ENCODE measurements at regions of chr5 and their contacts with region 1.

Region 1: GRCh38 chr5:178895651-178896571 is at the start of gene ZFP2:
- DNase-seq: peak; percentile 58
- H3K4me3 ChIP-seq: peak within 1 kb of the TSS; percentile 41 to 59 (median 54)
- H3K27ac ChIP-seq: no peak within 1 kb of the TSS
- H3K4me1 ChIP-seq: no peaks in the 10 kb centered on the region
- H3K27me3 ChIP-seq: no peaks in the 10 kb centered on the region
- CTCF ChIP-seq: no peak
- POLR2A ChIP-seq: no peak
- total RNA-seq, gene ZFP2: 0.21 and 0.75 TPM in 2 replicates

Region 2: DNA sequence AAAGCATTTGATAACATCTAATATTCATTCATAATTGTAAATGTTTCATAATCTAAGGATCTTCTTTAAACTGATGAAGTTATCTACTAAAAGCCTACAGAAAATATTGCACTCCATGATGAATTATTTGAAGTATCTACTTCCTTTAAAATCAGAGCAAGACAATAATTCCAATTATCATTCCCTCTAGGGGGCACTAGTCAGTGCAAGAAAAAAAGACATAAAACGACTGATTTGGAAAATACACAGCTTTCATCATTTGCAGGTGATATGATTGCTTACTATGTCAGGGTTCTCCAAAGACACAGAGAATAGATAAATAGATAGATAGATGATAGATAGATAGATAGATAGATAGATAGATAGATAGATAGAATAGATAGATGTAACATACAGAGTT is 112.8 kb after region 1 on chr5:
- CTCF ChIA-PET with region 1: no interaction called
- POLR2A ChIA-PET with region 1: no interaction called
- dilution Hi-C with region 1: no loop called
- intact Hi-C with region 1: no loop called
- DNase-seq: no peak
- H3K4me3 ChIP-seq: no peak overlapping the region
- H3K27ac ChIP-seq: no peak overlapping the region
- H3K4me1 ChIP-seq: no peaks in the 10 kb centered on the region
- H3K27me3 ChIP-seq: no peaks in the 10 kb centered on the region
- CTCF ChIP-seq: no peak
- POLR2A ChIP-seq: no peak

Region 3: GRCh38 chr5:179060116-179061008 is 164.5 kb after region 1 on chr5 and contains the start of gene ZNF354C:
- CTCF ChIA-PET with region 1: no interaction called
- POLR2A ChIA-PET with region 1: no interaction called
- dilution Hi-C with region 1: no loop called
- intact Hi-C with region 1: loop called (anchors 2 kb)
- DNase-seq: peak; percentile 93
- H3K4me3 ChIP-seq: peak within 1 kb of the TSS; percentile 1 to 73 (median 37)
- H3K27ac ChIP-seq: peak within 1 kb of the TSS; percentile 6
- H3K4me1 ChIP-seq: peaks cover 6% of the 10 kb centered on the region
- H3K27me3 ChIP-seq: no peaks in the 10 kb centered on the region
- CTCF ChIP-seq: no peak
- POLR2A ChIP-seq: peak; percentile 44
- total RNA-seq, gene ZNF354C: 4.7 and 5.0 TPM in 2 replicates

Measured in endothelial cell of umbilical vein (primary cell).